Panc1 (cell line): ENCODE measurements at regions of chr12 and their contacts with region 1.

Region 1: DNA sequence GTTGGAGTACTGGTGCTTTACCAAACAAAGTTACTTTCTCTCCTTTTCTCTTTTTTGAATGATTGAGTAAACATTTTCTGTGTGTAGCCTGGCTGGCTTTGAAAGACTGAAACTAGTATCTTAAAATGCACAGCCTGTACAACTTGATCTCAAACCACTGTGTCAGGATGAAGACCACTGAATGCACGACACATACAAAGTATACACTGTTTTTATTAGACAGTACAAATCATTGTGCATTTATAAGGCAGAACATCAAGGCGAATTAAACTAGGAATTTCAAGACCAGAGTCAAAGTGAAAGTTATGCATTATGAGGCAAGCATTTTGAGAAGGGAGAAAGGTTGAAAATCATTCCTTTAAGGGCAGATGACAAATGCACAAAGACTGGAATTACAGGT is 59.0 kb downstream of the PIWIL1 start:
- DNase-seq: no peak
- ATAC-seq: no peak
- H3K4me3 ChIP-seq: no peak overlapping the region
- H3K27ac ChIP-seq: no peak overlapping the region
- H3K4me1 ChIP-seq: no peaks in the 10 kb centered on the region
- H3K27me3 ChIP-seq: no peaks in the 10 kb centered on the region; the same call in none of the 2 replicates
- CTCF ChIP-seq: no peak

Region 2: GRCh38 chr12:130357241-130357640 is 39.4 kb before region 1 on chr12:
- CTCF ChIA-PET with region 1: no interaction called
- POLR2A ChIA-PET with region 1: no interaction called
- in situ Hi-C with region 1: no loop called
- intact Hi-C with region 1: no loop called
- DNase-seq: no peak
- ATAC-seq: no peak
- H3K4me3 ChIP-seq: no peak overlapping the region
- H3K27ac ChIP-seq: no peak overlapping the region
- H3K4me1 ChIP-seq: no peaks in the 10 kb centered on the region
- H3K27me3 ChIP-seq: peaks cover 31% of the 10 kb centered on the region
- CTCF ChIP-seq: no peak

Region 3: GRCh38 chr12:131684015-131684725 is 1287.5 kb after region 1 on chr12:
- CTCF ChIA-PET with region 1: no interaction called
- POLR2A ChIA-PET with region 1: interaction called, 13 read pairs
- in situ Hi-C with region 1: no loop called
- intact Hi-C with region 1: no loop called
- DNase-seq: no peak
- ATAC-seq: 0 out of 2 replicates have a peak, but pooled peaks have one; percentile 13
- H3K4me3 ChIP-seq: no peak overlapping the region
- H3K27ac ChIP-seq: no peak overlapping the region
- H3K4me1 ChIP-seq: no peaks in the 10 kb centered on the region
- H3K27me3 ChIP-seq: no peaks in the 10 kb centered on the region
- CTCF ChIP-seq: no peak